A673 (cell line): ENCODE measurements at regions of chr10 and their contacts with region 1.

Region 1: GRCh38 chr10:74738985-74739567 is 87.3 kb upstream of the KAT6B start:
- DNase-seq: no peak
- H3K4me3 ChIP-seq: no peak overlapping the region
- H3K27ac ChIP-seq: no peak overlapping the region
- H3K4me1 ChIP-seq: no peaks in the 10 kb centered on the region
- H3K27me3 ChIP-seq: no peaks in the 10 kb centered on the region
- CTCF ChIP-seq: peak; percentile 39; the same call in 1 of the 2 replicates

Region 2: DNA sequence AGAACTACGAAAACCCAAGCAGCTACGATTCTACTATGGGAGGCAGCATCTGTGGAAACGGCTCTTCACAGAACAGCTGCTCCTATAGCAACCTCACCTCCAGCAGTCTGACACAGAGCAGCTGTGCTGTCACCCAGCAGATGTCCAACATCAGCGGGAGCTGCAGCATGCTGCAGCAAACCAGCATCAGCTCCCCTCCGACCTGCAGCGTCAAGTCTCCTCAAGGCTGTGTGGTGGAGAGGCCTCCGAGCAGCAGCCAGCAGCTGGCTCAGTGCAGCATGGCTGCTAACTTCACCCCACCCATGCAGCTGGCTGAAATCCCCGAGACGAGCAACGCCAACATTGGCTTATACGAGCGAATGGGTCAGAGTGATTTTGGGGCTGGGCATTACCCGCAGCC is 290.8 kb after region 1 on chr10:
- CTCF ChIA-PET with region 1: no interaction called
- POLR2A ChIA-PET with region 1: no interaction called
- intact Hi-C with region 1: loop called (anchors 10 kb)
- DNase-seq: no peak
- H3K4me3 ChIP-seq: no peak overlapping the region
- H3K27ac ChIP-seq: no peak overlapping the region
- H3K4me1 ChIP-seq: no peaks in the 10 kb centered on the region
- H3K27me3 ChIP-seq: no peaks in the 10 kb centered on the region
- CTCF ChIP-seq: no peak